ENCODE measurements at regions of chr17 and their contacts with region 1.

Region 1: DNA sequence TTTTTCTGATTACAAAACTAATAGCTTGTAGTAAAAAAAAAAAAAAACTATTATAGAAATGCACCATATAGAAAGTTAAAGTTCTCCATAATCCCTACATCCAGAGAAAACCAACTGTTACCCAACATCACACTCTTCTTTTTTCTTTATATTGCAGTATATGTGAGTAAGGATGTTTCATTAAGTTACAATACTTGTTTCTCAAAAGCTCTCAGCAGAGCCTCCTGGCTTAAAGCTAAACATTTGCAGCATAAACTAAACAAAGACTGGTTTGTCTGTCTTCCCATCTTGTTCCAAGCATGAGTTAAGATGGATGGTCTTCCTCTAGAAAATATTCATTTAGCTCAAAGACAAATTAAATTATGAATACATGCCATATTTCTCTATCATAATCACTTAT is 25.2 kb downstream of the GRB2 start:
- DNase-seq: no peak
- H3K4me3 ChIP-seq: no peak overlapping the region
- H3K27me3 ChIP-seq: no peaks in the 10 kb centered on the region
- CTCF ChIP-seq: no peak

Region 2: GRCh38 chr17:75313941-75314551 is 66.3 kb before region 1 on chr17:
- CTCF ChIA-PET with region 1: no interaction called
- POLR2A ChIA-PET with region 1: interaction called, 11 read pairs
- DNase-seq: no peak
- H3K4me3 ChIP-seq: no peak overlapping the region
- H3K27me3 ChIP-seq: no peaks in the 10 kb centered on the region
- CTCF ChIP-seq: no peak

Region 3: DNA sequence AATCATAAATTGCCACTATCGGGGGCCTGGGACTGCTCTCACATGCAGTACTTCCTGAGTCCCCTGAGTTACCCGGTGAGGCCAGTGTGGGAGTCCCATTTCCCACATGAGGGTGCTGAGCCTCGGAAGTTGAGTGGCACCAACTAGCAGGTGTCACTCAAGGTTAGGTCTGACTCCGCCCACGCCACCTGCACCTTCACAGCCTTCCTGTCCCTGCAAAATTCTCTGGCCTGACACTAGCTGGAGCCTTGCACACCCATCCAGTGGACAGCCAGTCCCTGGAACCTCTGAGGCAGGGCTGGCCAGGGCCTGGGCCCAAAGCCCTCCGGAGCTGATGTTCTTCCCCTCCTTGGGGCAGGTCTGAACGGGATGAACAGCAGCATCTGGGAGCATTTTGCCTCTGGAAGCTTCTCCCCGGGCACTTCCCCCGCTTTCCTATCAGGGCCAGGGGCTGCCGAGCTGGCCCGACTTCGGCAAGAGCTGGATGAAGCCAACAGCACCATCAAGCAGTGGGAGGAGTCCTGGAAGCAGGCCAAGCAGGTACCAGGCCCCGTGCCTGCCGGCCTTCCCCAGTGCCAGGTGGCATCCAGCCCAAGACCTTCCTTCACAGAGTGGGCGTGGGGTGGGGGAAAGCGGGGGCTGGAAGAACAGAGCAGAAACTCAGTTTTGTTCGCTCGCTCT is 441.9 kb after region 1 on chr17:
- CTCF ChIA-PET with region 1: no interaction called
- POLR2A ChIA-PET with region 1: no interaction called
- DNase-seq: no peak
- H3K4me3 ChIP-seq: no peak overlapping the region
- H3K27me3 ChIP-seq: no peaks in the 10 kb centered on the region
- CTCF ChIP-seq: no peak

Measured in BJ (cell line).